Endothelial cell of umbilical vein (primary cell): ENCODE measurements at regions of chr3 and their contacts with region 1.

Region 1: GRCh38 chr3:194344012-194344411 is 7.1 kb downstream of the CPN2 start:
- DNase-seq: peak; percentile 64
- H3K4me3 ChIP-seq: no peak overlapping the region
- H3K27ac ChIP-seq: no peak overlapping the region
- H3K4me1 ChIP-seq: no peaks in the 10 kb centered on the region
- H3K27me3 ChIP-seq: peaks cover 0 to 2% of the 10 kb centered on the region in 2 experiments
- CTCF ChIP-seq: peak; percentile 91 to 94
- POLR2A ChIP-seq: no peak

Region 2: GRCh38 chr3:193665370-193665989 is 678.5 kb before region 1 on chr3:
- CTCF ChIA-PET with region 1: interaction called, 56 read pairs
- POLR2A ChIA-PET with region 1: no interaction called
- dilution Hi-C with region 1: no loop called
- intact Hi-C with region 1: loop called (anchors 2 kb)
- DNase-seq: peak; percentile 57
- H3K4me3 ChIP-seq: no peak overlapping the region
- H3K27ac ChIP-seq: no peak overlapping the region
- H3K4me1 ChIP-seq: no peaks in the 10 kb centered on the region
- H3K27me3 ChIP-seq: no peaks in the 10 kb centered on the region
- CTCF ChIP-seq: peak in 1 of 2 donors; percentile 22
- POLR2A ChIP-seq: no peak

Region 3: DNA sequence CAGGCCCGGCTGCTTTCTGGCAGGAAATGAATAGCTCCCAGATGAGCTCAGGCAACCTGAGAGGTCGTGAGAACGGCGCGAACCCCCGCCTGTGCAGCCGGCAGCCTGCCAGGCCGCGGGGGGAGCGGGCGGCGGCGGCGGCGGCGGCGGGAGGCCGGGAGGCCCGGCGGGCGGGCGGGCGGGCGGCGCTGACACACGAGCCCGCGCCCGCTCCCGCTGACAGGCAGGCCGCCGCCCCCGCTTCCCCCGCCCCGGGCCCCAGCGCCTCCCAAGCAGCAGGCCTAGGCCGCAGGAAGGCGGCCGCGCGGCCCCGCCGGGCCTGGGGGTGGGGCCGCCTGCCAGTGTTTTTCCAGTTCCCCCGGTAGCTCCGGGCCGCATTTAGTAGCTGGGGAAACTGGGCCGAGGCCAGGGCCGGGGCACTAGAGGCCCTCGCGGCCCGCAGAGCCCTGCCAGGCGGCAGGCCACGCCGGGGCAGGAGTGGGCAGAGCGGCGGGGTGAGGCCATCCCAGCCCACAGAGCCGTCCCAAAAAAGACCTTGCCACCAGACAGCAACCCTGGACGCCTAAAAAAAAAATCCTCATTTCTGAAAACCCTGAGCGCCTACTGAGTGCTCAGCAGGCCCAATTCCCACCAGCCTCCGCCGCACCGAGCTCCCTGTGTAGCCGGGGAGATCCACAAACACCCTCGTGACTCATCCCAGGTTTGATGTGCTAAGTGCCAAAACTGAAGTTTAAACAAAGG is 202.4 kb before region 1 on chr3:
- CTCF ChIA-PET with region 1: no interaction called
- POLR2A ChIA-PET with region 1: no interaction called
- dilution Hi-C with region 1: no loop called
- intact Hi-C with region 1: no loop called
- DNase-seq: peak; percentile 93
- H3K4me3 ChIP-seq: no peak overlapping the region
- H3K27ac ChIP-seq: peak overlapping the region; percentile 99
- H3K4me1 ChIP-seq: peaks cover 40% of the 10 kb centered on the region
- H3K27me3 ChIP-seq: no peaks in the 10 kb centered on the region
- CTCF ChIP-seq: peak in 1 of 2 donors; percentile 14
- POLR2A ChIP-seq: no peak

Region 4: DNA sequence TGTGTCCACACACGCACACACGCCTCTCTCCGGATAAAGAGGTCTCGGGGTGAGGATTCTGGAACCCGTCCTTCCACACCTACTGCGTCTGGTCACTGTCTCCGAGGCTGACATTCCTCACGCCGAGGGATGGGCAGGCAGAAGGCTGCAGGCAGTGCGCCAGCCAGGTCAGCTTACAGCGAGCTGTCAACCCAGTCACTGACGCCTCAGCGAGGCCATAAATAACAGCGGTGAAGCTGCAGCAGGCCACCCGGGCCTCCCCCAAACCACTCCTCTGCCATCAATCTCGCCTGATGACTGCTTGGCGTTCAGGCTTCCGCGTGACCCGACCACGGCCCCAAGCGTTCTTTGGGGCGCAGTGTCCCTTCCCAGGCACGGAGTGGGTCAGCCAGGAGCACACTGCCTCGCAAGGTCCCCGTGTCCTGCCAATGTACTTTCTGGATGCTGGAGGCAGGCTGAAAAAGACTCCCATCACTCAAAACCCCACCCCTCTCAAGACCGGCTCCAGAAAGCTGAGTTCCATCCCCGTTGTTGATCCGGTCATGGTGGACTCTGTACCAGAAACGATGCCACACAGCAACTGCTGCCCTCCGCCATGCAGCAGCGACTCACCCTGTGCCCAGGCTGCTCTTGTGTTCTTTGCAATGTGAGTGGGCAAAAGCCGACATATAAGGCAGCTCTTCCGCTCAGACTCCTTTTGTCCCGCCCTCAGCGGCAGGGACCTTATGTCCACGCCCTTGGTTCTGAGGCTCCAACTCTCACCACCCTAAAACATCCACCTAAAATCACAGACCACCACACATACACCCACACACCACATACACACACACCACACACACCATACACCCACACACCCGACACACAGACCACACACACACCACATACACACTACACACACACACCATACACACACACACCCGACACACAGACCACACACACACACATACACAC is 20.0 kb before region 1 on chr3:
- CTCF ChIA-PET with region 1: interaction called, 11 read pairs
- POLR2A ChIA-PET with region 1: no interaction called
- dilution Hi-C with region 1: no loop called
- intact Hi-C with region 1: no loop called
- DNase-seq: no peak
- H3K4me3 ChIP-seq: no peak overlapping the region
- H3K27ac ChIP-seq: no peak overlapping the region
- H3K4me1 ChIP-seq: no peaks in the 10 kb centered on the region
- H3K27me3 ChIP-seq: no peaks in the 10 kb centered on the region
- CTCF ChIP-seq: no peak
- POLR2A ChIP-seq: no peak

Region 5: GRCh38 chr3:194353956-194354714 is 10.1 kb after region 1 on chr3:
- CTCF ChIA-PET with region 1: interaction called, 32 read pairs
- POLR2A ChIA-PET with region 1: no interaction called
- dilution Hi-C with region 1: no loop called
- intact Hi-C with region 1: no loop called
- DNase-seq: no peak
- H3K4me3 ChIP-seq: no peak overlapping the region
- H3K27ac ChIP-seq: no peak overlapping the region
- H3K4me1 ChIP-seq: no peaks in the 10 kb centered on the region
- H3K27me3 ChIP-seq: peaks cover 0 to 4% of the 10 kb centered on the region in 2 experiments
- CTCF ChIP-seq: no peak
- POLR2A ChIP-seq: no peak

Region 6: GRCh38 chr3:194375473-194376240 is 31.6 kb after region 1 on chr3:
- CTCF ChIA-PET with region 1: interaction called, 15 read pairs
- POLR2A ChIA-PET with region 1: no interaction called
- dilution Hi-C with region 1: no loop called
- intact Hi-C with region 1: no loop called
- DNase-seq: peak; percentile 68
- H3K4me3 ChIP-seq: peak overlapping the region in 1 of 3 experiments; percentile 34
- H3K27ac ChIP-seq: no peak overlapping the region
- H3K4me1 ChIP-seq: peaks cover 13% of the 10 kb centered on the region
- H3K27me3 ChIP-seq: peaks cover 2 to 5% of the 10 kb centered on the region in 2 experiments
- CTCF ChIP-seq: no peak
- POLR2A ChIP-seq: no peak

Region 7: DNA sequence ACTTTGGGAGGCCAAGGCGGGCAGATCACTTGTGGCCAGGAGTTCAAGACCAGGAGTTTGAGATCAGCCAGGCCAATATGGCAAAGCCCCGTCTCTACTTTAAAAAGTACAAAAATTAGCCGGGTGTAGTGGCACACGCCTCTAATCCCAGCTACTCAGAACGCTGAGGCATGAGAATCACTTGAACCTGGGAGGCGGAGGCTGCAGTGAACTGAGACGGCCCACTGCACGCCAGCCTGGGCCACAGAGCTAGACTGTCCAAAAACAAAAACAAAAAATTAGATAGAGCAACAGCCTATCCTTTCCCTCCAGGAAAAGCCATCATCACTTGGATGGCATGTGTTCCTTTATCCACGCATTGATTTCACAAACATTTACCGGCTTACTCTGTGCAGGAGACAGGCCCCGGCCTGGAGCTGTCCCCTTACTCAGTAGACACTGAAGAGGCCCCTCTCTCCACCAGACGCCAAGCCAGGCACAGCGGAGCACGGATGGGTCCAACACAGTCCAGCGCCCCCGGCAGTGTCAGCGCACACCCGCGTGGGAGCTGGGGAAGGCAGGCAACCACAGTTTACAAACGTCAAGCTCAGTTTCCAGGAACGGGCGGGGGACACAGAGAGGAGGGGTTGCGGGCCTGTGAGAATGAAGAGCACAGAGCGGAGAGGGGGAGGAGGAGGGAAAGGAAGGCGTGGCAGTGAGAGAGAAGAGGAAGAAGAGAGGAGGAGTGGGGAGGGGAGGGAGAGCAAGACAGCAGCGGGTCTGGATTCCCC is 52.0 kb after region 1 on chr3:
- CTCF ChIA-PET with region 1: interaction called, 74 read pairs
- POLR2A ChIA-PET with region 1: no interaction called
- dilution Hi-C with region 1: no loop called
- intact Hi-C with region 1: no loop called
- DNase-seq: no peak
- H3K4me3 ChIP-seq: no peak overlapping the region
- H3K27ac ChIP-seq: no peak overlapping the region
- H3K4me1 ChIP-seq: peaks cover 6% of the 10 kb centered on the region
- H3K27me3 ChIP-seq: peaks cover 24 to 59% of the 10 kb centered on the region in 2 experiments
- CTCF ChIP-seq: no peak
- POLR2A ChIP-seq: no peak

Region 8: DNA sequence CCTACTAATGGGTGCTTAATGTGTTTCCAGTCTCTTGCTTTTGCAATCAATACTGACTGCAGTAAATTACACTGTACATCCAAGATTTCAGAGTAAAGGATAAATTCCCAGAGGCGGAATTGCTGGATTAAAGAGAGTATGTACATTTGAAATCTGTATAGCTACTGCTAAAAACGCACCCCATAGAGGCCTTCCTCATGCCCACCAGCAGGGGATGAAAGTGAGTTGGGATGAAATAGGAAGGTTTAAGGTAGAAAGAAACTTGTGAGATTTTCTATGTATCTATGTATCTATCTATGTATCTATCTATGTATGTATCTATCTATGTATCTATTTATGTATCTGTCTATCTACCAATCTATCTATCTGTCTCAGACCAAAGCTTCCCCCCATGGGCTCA is 260.8 kb after region 1 on chr3:
- CTCF ChIA-PET with region 1: no interaction called
- POLR2A ChIA-PET with region 1: no interaction called
- dilution Hi-C with region 1: no loop called
- intact Hi-C with region 1: no loop called
- DNase-seq: no peak
- H3K4me3 ChIP-seq: no peak overlapping the region
- H3K27ac ChIP-seq: no peak overlapping the region
- H3K4me1 ChIP-seq: no peaks in the 10 kb centered on the region
- H3K27me3 ChIP-seq: no peaks in the 10 kb centered on the region
- CTCF ChIP-seq: peak; percentile 29 to 44
- POLR2A ChIP-seq: no peak